Head of caudate nucleus (tissue), 42 donors: ENCODE measurements at regions of chr2 and their contacts with region 1.

Region 1: DNA sequence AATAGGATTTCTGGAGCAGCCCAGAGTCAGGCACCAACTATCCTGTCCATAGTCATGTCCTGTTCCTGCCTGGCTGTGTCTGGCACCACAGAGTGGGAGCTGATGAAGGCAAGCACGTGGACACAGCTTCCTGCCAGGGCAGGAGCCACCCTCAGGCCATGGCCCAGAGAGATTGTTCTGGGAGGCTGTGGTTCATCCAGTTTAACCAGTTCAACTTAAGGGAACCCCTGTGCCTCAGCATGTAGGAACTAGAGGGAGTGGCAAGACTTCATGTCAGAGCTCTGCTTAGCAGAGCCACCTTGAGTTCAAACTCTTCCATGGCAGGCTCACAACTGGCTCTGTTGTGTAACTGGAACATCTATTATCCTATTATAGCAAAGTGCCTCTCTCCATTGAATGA is 73.2 kb upstream of the NCKAP5 start:
- DNase-seq: peak; percentile 25 to 89 (median 70)

Region 2: DNA sequence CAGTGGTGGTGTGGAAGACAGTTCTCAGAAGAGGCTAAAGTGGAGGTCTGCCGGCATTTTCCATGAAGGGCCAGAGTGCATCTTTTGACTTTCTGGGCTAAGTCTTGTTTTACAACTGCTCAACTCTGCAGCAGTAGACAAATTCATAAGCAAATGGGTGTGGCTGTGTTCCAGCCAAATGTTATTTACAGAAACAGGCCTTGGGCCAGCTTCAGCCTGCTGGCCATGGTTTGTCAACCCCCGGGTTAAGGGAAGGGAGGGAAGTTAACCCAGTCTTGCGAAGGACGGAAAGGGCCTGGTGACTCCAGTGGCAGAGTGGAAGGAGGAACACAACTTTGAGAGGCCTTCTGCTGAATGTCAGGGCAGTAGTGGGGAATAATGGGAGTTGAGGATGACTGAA is 39.0 kb before region 1 on chr2:
- intact Hi-C with region 1: loop called (anchors 5 kb)
- DNase-seq: peak in 8 of 42 donors; percentile 23 to 61 (median 35)

Region 3: DNA sequence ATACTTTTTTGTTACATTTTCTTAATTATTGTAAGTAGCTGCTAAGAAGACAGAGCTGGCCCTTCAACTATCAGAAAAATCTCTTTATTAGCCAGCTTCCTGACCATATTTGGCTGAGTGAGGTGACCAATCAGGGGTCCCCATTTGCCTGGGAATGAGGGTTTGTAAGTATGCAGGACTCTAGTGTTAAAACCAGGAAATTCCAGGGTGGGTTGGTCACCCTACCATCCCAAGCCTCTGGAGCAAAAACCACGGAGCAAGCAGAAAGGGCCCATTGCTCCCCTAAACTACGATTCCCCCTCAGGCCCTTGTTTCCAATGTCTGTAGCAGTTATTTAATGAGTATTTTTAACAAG is 92.4 kb after region 1 on chr2:
- intact Hi-C with region 1: no loop called
- DNase-seq: no peak